Activated CD4-positive, alpha-beta memory T cell treated with anti-CD3 and anti-CD28 coated beads, Interleukin-2, amount 10 ng/mL, durations not matched to agents 7 days and 5 days (primary cell): ENCODE measurements at regions of chr4 and their contacts with region 1.

Region 1: GRCh38 chr4:88818631-88819470 is 121.2 kb upstream of the NAP1L5 start:
- DNase-seq: peak; percentile 45
- H3K4me3 Mint-ChIP-seq: no peak overlapping the region
- H3K27ac Mint-ChIP-seq: no peak overlapping the region
- H3K4me1 Mint-ChIP-seq: peaks cover 30% of the 10 kb centered on the region
- H3K27me3 Mint-ChIP-seq: peaks cover 11% of the 10 kb centered on the region

Region 2: GRCh38 chr4:88779431-88779830 is 39.4 kb before region 1 on chr4:
- CTCF ChIA-PET with region 1: no interaction called
- POLR2A ChIA-PET with region 1: no interaction called
- DNase-seq: no peak
- H3K4me3 Mint-ChIP-seq: no peak overlapping the region
- H3K27ac Mint-ChIP-seq: no peak overlapping the region
- H3K4me1 Mint-ChIP-seq: no peaks in the 10 kb centered on the region
- H3K27me3 Mint-ChIP-seq: no peaks in the 10 kb centered on the region

Region 3: DNA sequence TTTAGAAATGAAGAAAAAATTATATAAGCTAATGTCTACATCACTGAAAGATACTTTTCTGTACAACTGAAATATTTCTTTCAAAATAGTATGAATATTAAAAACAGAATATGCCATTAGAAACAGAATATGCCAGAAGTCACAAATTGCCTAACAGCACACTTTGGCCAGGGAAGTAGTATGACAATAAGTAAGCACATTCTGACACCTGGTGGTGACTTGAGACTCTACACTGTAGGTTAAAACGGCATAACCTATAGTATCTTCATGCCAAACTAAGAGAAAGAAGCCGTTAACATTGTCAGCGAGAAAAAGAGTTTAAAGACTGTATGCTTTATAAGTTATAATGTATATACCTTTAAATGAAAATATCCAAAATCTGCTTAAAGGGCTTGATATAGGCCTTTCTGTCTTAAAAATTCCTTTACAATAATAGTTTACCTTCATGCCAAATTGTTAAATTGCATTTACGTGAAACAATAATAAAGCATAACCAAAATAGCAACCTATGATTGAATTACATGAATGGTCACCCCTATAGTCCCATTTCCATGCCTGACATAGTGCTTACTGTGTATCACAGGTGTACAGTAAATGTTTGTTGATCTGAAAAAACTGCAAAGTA is 205.3 kb after region 1 on chr4:
- CTCF ChIA-PET with region 1: interaction called, 118 read pairs
- POLR2A ChIA-PET with region 1: interaction called, 6 read pairs
- DNase-seq: peak; percentile 44
- H3K4me3 Mint-ChIP-seq: no peak overlapping the region
- H3K27ac Mint-ChIP-seq: no peak overlapping the region
- H3K4me1 Mint-ChIP-seq: no peaks in the 10 kb centered on the region
- H3K27me3 Mint-ChIP-seq: no peaks in the 10 kb centered on the region